ENCODE measurements at regions of chr20 and their contacts with region 1.

Region 1: GRCh38 chr20:10553326-10553984 is 118.3 kb downstream of the SLX4IP start:
- DNase-seq: no peak
- ATAC-seq: peak; percentile 77
- H3K4me3 ChIP-seq: no peak overlapping the region
- H3K27ac ChIP-seq: no peak overlapping the region
- H3K4me1 ChIP-seq: peaks cover 30% of the 10 kb centered on the region
- H3K27me3 ChIP-seq: no peaks in the 10 kb centered on the region
- CTCF ChIP-seq: peak; percentile 76 to 85 (median 83)
- EP300 ChIP-seq: no peak
- POLR2A ChIP-seq: no peak
- RAD21 ChIP-seq: peak; percentile 94

Region 2: GRCh38 chr20:10419550-10420133 is 133.8 kb before region 1 on chr20:
- CTCF ChIA-PET with region 1: no interaction called
- POLR2A ChIA-PET with region 1: no interaction called
- RAD21 ChIA-PET with region 1: no interaction called
- SMC1A ChIA-PET with region 1: no interaction called
- in situ Hi-C with region 1: no loop called
- intact Hi-C with region 1: no loop called
- DNase-seq: no peak
- ATAC-seq: no peak
- H3K4me3 ChIP-seq: no peak overlapping the region
- H3K27ac ChIP-seq: no peak overlapping the region
- H3K4me1 ChIP-seq: 0 out of 2 replicates have a peak, but pooled peaks cover 4% of the 10 kb centered on the region
- H3K27me3 ChIP-seq: no peaks in the 10 kb centered on the region
- CTCF ChIP-seq: no peak
- EP300 ChIP-seq: no peak
- POLR2A ChIP-seq: no peak
- RAD21 ChIP-seq: no peak

Region 3: DNA sequence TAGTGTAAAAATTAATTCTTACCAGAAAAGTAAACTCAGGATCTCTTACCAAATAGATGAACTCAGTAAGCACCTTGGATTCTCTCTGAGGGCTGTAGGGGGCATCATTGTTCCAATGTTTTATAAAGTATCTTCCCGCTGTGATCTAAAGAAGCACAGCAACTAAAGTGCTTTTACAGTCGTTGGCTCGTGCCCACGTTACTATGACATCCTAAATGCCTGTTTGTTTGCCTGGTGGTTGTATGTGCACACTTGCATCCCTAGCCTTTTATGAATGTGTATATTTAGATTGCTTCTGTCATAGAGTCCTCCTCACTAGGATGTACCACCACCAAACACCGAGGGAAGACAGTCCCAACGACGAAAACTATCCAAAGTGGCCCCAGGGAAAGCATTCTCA is 83.9 kb before region 1 on chr20:
- CTCF ChIA-PET with region 1: interaction called, 7 read pairs
- POLR2A ChIA-PET with region 1: interaction called, 4 read pairs
- RAD21 ChIA-PET with region 1: interaction called, 9 read pairs
- SMC1A ChIA-PET with region 1: interaction called, 19 read pairs
- in situ Hi-C with region 1: no loop called
- intact Hi-C with region 1: loop called (anchors 5 kb)
- DNase-seq: no peak
- ATAC-seq: peak; percentile 81
- H3K4me3 ChIP-seq: no peak overlapping the region
- H3K27ac ChIP-seq: no peak overlapping the region
- H3K4me1 ChIP-seq: peaks cover 3% of the 10 kb centered on the region; the same call in 1 of the 2 replicates
- H3K27me3 ChIP-seq: no peaks in the 10 kb centered on the region
- CTCF ChIP-seq: peak; percentile 32 to 50 (median 49); a peak in 5 of 6 replicates
- EP300 ChIP-seq: no peak
- POLR2A ChIP-seq: no peak
- RAD21 ChIP-seq: peak; percentile 67

Region 4: GRCh38 chr20:10511509-10512251 is 41.8 kb before region 1 on chr20:
- CTCF ChIA-PET with region 1: interaction called, 27 read pairs
- POLR2A ChIA-PET with region 1: interaction called, 7 read pairs
- RAD21 ChIA-PET with region 1: interaction called, 23 read pairs
- SMC1A ChIA-PET with region 1: interaction called, 11 read pairs
- in situ Hi-C with region 1: no loop called
- intact Hi-C with region 1: no loop called
- DNase-seq: peak; percentile 94
- ATAC-seq: peak; percentile 98
- H3K4me3 ChIP-seq: no peak overlapping the region; the same call in 1 of the 2 replicates
- H3K27ac ChIP-seq: peak overlapping the region; percentile 87
- H3K4me1 ChIP-seq: peaks cover 32% of the 10 kb centered on the region
- H3K27me3 ChIP-seq: no peaks in the 10 kb centered on the region
- CTCF ChIP-seq: 0 out of 6 replicates have a peak, but pooled peaks of 1 of the 3 experiments have one; percentile 2
- EP300 ChIP-seq: peak; percentile 55 to 78; a peak in 3 of 4 replicates
- POLR2A ChIP-seq: peak; percentile 57
- RAD21 ChIP-seq: 0 out of 2 replicates have a peak, but pooled peaks have one; percentile 5

Region 5: DNA sequence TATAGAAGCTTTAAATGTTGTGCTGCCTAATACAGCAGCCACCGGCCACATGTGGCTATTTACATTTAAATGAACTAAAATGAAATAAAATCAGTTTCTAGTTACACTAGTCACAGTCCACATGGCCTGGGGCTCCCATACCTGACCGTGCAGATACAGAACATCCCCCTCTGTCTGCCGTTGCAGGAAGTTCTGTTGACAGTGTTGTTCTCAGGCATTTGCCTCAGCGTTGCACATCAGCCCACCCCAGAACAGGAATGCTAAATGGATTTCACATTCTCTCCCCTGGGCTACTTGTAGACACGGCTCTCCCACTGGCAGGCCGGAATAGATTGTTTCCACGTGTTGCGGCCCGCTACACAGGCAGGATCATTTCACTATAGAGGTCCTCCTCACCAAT is 94.0 kb after region 1 on chr20:
- CTCF ChIA-PET with region 1: interaction called, 3 read pairs
- POLR2A ChIA-PET with region 1: no interaction called
- RAD21 ChIA-PET with region 1: interaction called, 3 read pairs
- SMC1A ChIA-PET with region 1: no interaction called
- in situ Hi-C with region 1: no loop called
- intact Hi-C with region 1: loop called (anchors 5 kb)
- DNase-seq: no peak
- ATAC-seq: peak; percentile 62
- H3K4me3 ChIP-seq: no peak overlapping the region
- H3K27ac ChIP-seq: no peak overlapping the region
- H3K4me1 ChIP-seq: peaks cover 14% of the 10 kb centered on the region
- H3K27me3 ChIP-seq: no peaks in the 10 kb centered on the region
- CTCF ChIP-seq: peak; percentile 37 to 52 (median 42); a peak in 5 of 6 replicates
- EP300 ChIP-seq: no peak
- POLR2A ChIP-seq: no peak
- RAD21 ChIP-seq: peak; percentile 43

Region 6: DNA sequence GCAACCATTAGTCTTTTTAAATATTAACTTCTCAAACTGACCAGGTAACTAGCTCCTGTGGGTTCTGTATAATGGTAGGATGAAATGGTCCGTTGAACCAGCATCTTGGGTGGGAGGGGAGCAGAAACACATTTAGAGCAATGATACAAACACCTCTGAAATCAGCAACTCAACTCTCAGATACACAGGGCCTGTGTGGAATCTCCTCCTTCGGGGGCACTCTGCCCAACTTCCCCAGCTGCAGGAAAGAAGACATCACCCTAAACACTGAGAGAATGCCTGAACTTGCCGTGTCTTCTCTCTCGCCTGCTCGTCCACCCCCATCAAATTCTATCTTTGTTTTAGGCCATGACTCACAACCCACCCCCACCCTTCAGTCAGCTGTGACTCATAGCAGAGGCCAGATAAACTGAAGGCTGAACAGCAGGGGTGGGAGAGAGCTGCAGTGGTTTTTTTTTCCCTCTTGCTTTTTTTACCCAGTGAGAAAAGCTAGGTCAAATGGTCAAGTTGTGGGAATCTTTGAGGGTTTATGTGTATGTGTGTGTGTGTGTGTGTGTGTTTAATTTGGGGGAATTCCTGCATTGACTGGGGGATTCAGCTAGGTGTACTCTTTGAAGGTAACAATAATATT is 713.8 kb after region 1 on chr20:
- CTCF ChIA-PET with region 1: interaction called, 6 read pairs
- POLR2A ChIA-PET with region 1: no interaction called
- RAD21 ChIA-PET with region 1: interaction called, 8 read pairs
- SMC1A ChIA-PET with region 1: interaction called, 17 read pairs
- in situ Hi-C with region 1: loop called (anchors 5 kb)
- intact Hi-C with region 1: loop called (anchors 2 kb)
- DNase-seq: peak; percentile 79
- ATAC-seq: peak; percentile 93
- H3K4me3 ChIP-seq: no peak overlapping the region
- H3K27ac ChIP-seq: peak overlapping the region; percentile 37; the same call in 1 of the 2 replicates
- H3K4me1 ChIP-seq: peaks cover 15% of the 10 kb centered on the region
- H3K27me3 ChIP-seq: no peaks in the 10 kb centered on the region
- CTCF ChIP-seq: no peak
- EP300 ChIP-seq: peak; percentile 71 to 83
- POLR2A ChIP-seq: no peak
- RAD21 ChIP-seq: peak; percentile 45; the same call in 1 of the 2 replicates

Region 7: DNA sequence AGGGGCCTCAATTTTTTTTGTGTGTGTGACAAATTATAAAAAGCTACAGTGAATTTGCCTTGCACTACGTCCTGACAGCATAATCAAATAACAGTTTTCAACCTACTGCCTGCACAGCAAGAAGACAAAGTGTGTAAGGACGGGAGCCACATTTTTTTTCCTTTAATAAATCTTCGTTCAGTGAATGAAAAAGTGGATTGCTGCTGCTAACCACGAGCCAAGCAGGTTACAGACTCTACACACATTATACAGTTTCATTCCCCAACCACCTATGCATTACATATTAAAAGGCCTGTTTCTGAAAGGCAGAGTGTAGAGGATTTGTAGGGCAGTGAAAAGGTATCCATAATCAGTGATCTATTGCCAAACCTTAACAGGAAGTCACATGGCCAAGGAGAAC is 794.3 kb after region 1 on chr20:
- CTCF ChIA-PET with region 1: no interaction called
- POLR2A ChIA-PET with region 1: no interaction called
- RAD21 ChIA-PET with region 1: no interaction called
- SMC1A ChIA-PET with region 1: interaction called, 3 read pairs
- in situ Hi-C with region 1: no loop called
- intact Hi-C with region 1: loop called (anchors 10 kb)
- DNase-seq: no peak
- ATAC-seq: peak; percentile 67
- H3K4me3 ChIP-seq: no peak overlapping the region
- H3K27ac ChIP-seq: no peak overlapping the region
- H3K4me1 ChIP-seq: no peaks in the 10 kb centered on the region
- H3K27me3 ChIP-seq: no peaks in the 10 kb centered on the region
- CTCF ChIP-seq: no peak
- EP300 ChIP-seq: no peak
- POLR2A ChIP-seq: no peak
- RAD21 ChIP-seq: no peak